Thyroid gland (tissue), 4 donors: ENCODE measurements at regions of chr14 and their contacts with region 1.

Region 1: DNA sequence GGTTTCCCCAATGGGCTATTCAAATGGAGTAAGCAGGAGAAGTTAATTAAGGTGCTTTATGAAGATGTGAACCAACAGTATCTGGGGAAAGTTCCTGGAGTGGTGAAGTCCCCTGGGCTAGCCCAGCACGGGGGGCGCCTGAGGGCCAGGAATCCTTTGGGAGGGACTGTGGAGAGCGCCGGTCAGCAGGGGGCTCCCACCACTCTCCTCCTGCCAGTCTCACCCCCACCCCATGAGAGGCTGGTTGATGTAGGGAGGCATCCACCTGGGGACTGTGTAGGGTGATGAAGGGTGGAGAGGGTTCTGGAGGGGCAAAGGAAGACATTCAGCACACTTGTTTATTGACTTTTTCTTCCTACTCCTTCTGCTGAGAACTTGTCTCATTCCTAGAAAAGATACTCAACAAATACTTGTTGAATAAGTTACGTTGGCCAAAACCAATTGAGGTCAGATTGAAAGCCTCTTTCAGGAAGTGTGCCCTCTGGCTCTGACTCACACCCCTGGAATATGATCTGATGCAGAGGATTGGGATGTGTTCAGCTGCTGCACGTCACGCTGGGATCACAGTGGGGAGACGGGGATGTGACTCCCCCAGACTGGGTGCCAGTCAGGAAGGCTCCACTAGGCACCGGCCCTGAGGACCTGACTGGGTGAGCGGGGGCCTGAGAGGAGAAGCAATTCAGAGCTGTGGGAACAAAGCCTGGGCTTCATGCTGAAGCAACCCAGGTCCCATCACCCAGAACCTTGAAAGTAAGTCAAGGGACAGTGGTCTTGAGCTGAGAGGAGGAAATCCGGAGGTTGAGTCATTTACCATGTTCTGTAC is 4.2 kb downstream of the CEBPE start:
- DNase-seq: no peak
- H3K4me3 ChIP-seq: no peak overlapping the region
- H3K27ac ChIP-seq: peak overlapping the region in 1 of 3 donors; percentile 52
- H3K4me1 ChIP-seq: peaks cover 6 to 30% of the 10 kb centered on the region in 2 donors
- H3K27me3 ChIP-seq: no peaks in the 10 kb centered on the region
- CTCF ChIP-seq: no peak
- POLR2A ChIP-seq: no peak

Region 2: GRCh38 chr14:23068476-23069412 is 46.1 kb before region 1 on chr14:
- intact Hi-C with region 1: loop called (anchors 5 kb)
- DNase-seq: peak; percentile 78 to 85
- H3K4me3 ChIP-seq: no peak overlapping the region
- H3K27ac ChIP-seq: no peak overlapping the region
- H3K4me1 ChIP-seq: peaks cover 16 to 20% of the 10 kb centered on the region in 2 donors
- H3K27me3 ChIP-seq: no peaks in the 10 kb centered on the region
- CTCF ChIP-seq: peak; percentile 93 to 100 (median 98)
- POLR2A ChIP-seq: no peak

Region 3: DNA sequence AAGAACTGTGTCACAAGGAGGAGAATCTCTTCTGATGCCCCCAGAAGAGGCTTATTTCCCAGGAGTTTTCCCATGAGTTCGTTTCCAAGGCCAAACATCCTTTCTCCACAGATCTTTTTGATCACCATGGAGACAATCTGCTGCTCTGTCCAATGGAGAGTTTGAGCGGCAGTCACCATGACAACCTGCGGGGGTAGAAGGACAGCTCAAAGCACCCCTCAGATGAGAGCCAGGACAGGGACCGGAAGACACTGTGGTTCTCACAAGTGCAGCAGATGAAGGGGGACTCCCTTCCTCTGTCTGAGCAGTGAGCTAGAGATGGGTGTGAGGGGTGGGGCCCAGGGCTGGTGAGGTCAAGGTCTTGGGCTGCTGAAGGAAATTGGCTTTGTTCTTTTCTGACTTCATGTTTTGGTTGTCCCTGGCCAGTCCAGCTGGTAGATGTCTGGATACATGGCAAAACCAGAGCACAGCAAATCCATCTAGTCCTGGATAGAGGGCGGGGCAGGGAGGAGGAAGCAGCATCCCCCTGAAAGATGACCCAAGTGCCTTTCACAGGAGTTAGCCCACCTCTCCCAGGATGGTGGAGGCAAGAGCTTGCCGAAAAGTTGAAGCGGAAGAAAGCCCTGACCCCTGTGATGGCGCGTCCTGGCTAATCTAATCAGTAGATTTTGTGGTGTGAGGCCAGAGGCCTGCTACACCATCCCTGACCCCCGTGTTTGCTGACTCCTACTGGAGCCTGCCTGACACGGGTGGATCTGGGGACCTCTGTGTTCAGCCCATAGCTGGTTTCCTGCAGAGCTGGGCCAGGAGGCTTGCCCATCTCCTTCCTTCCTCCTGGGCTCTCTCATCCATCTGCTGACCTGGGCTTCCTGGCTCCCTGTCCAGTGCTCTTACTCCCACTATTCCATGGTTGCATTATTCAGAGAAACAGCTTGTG is 545.7 kb after region 1 on chr14:
- intact Hi-C with region 1: no loop called
- DNase-seq: no peak
- H3K4me3 ChIP-seq: no peak overlapping the region
- H3K27ac ChIP-seq: no peak overlapping the region
- H3K4me1 ChIP-seq: no peaks in the 10 kb centered on the region
- H3K27me3 ChIP-seq: no peaks in the 10 kb centered on the region
- CTCF ChIP-seq: no peak
- POLR2A ChIP-seq: no peak